ENCODE measurements at regions of chr11 and their contacts with region 1.

Region 1: DNA sequence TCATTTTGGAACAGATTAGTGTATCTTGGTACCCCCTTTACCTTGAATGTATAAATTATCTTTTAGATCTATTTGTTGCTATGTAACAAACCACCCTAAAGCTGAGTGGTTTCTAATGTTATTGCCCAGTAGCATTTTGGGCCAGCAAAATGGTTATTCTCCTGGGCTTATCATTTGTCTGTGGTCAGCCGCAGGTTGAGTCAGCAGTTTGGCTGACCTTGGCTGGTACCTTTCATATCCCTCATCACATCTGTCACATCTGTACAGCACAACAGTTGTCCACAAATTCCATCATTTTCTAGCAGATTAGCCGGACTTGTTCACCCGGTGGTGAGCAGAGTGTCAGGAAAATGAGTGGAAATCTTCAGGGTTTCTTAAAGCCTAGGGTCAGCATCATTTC is 588.5 kb upstream of the ARHGAP42 start:
- DNase-seq: no peak
- H3K4me3 ChIP-seq: no peak overlapping the region
- H3K27ac ChIP-seq: no peak overlapping the region
- H3K4me1 ChIP-seq: peaks cover 35% of the 10 kb centered on the region
- H3K27me3 ChIP-seq: no peaks in the 10 kb centered on the region
- CTCF ChIP-seq: no peak

Region 2: GRCh38 chr11:100031973-100032372 is 66.6 kb before region 1 on chr11:
- CTCF ChIA-PET with region 1: no interaction called
- POLR2A ChIA-PET with region 1: no interaction called
- intact Hi-C with region 1: no loop called
- DNase-seq: no peak
- H3K4me3 ChIP-seq: no peak overlapping the region
- H3K27ac ChIP-seq: no peak overlapping the region
- H3K4me1 ChIP-seq: no peaks in the 10 kb centered on the region
- H3K27me3 ChIP-seq: no peaks in the 10 kb centered on the region
- CTCF ChIP-seq: no peak

Region 3: DNA sequence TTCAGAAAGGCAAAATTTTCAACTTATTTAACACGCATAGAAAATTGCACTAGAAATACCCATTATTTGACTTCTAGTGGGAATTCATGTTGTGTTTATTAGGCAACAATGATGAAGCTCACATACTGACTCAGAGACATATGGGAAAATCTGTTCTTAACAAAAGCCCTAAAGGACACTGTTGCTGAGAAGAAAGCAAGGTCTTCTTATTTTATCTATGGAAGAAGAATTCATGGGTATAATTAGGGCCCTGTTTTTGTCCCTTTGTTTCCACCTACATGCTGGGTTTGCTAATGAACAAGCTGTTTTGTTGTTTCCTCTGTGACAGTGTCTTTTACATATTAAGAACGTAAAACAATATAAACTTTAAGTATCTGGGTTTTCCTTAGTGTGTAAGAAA is 18.2 kb before region 1 on chr11:
- CTCF ChIA-PET with region 1: interaction called, 8 read pairs
- POLR2A ChIA-PET with region 1: no interaction called
- intact Hi-C with region 1: loop called (anchors 1 kb)
- DNase-seq: peak; percentile 93
- H3K4me3 ChIP-seq: no peak overlapping the region
- H3K27ac ChIP-seq: peak overlapping the region; percentile 75
- H3K4me1 ChIP-seq: peaks cover 35% of the 10 kb centered on the region
- H3K27me3 ChIP-seq: no peaks in the 10 kb centered on the region
- CTCF ChIP-seq: no peak

Region 4: GRCh38 chr11:100220801-100221200 is 122.2 kb after region 1 on chr11:
- CTCF ChIA-PET with region 1: no interaction called
- POLR2A ChIA-PET with region 1: no interaction called
- intact Hi-C with region 1: loop called (anchors 5 kb)
- DNase-seq: peak; percentile 31
- H3K4me3 ChIP-seq: peak overlapping the region; percentile 30
- H3K27ac ChIP-seq: peak overlapping the region; percentile 73
- H3K4me1 ChIP-seq: peaks cover 31% of the 10 kb centered on the region
- H3K27me3 ChIP-seq: no peaks in the 10 kb centered on the region
- CTCF ChIP-seq: no peak

Region 5: GRCh38 chr11:100467821-100468508 is 369.4 kb after region 1 on chr11:
- CTCF ChIA-PET with region 1: no interaction called
- POLR2A ChIA-PET with region 1: no interaction called
- intact Hi-C with region 1: no loop called
- DNase-seq: no peak
- H3K4me3 ChIP-seq: no peak overlapping the region
- H3K27ac ChIP-seq: no peak overlapping the region
- H3K4me1 ChIP-seq: peaks cover 13% of the 10 kb centered on the region
- H3K27me3 ChIP-seq: no peaks in the 10 kb centered on the region
- CTCF ChIP-seq: no peak

Region 6: GRCh38 chr11:100562128-100562527 is 463.6 kb after region 1 on chr11:
- CTCF ChIA-PET with region 1: no interaction called
- POLR2A ChIA-PET with region 1: no interaction called
- intact Hi-C with region 1: loop called (anchors 5 kb)
- DNase-seq: peak; percentile 75
- H3K4me3 ChIP-seq: no peak overlapping the region
- H3K27ac ChIP-seq: no peak overlapping the region
- H3K4me1 ChIP-seq: peaks cover 29% of the 10 kb centered on the region
- H3K27me3 ChIP-seq: no peaks in the 10 kb centered on the region
- CTCF ChIP-seq: no peak

Measured in A673 (cell line).